Esophagus muscularis mucosa (tissue), 4 donors: ENCODE measurements at regions of chr17 and their contacts with region 1.

Region 1: GRCh38 chr17:43388359-43389045 is 10.3 kb upstream of the ARL4D start:
- DNase-seq: peak; percentile 98
- H3K4me3 ChIP-seq: peak overlapping the region; percentile 59 to 81 (median 70)
- H3K27ac ChIP-seq: peak overlapping the region; percentile 95 to 99 (median 97)
- H3K4me1 ChIP-seq: peaks cover 7 to 22% (median 18%) of the 10 kb centered on the region in 4 donors
- H3K27me3 ChIP-seq: no peaks in the 10 kb centered on the region
- CTCF ChIP-seq: no peak
- EP300 ChIP-seq: no peak
- POLR2A ChIP-seq: peak; percentile 88

Region 2: DNA sequence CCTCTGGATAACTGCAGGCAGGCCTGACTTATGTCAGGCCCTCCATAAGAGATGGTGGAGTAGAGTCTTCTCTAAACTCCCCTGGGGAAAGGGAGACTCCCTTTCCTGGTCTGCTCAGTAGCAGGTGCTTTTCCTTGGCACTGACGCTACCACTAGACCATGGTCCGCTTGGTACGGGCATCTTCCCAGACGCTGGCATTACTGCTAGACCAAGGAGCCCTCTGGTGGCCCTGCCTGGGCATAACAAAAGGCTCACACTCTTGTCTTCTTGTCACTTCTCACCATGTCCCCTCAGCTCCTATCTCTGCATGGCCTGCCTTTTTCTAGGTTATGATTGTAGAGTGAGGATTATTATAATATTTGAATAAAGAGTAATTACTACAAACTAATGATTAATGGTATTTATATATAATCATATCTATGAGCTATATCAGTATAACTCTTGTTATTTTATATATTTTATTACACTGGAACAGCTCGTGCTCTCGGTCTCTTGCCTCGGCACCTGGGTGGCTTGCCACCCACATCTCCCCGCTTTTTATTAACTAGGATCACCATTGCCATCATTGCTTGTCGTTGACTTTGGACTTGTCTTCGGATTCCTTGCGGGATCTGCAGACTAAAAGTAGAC is 49.5 kb before region 1 on chr17:
- intact Hi-C with region 1: no loop called
- DNase-seq: no peak
- H3K4me3 ChIP-seq: no peak overlapping the region
- H3K27ac ChIP-seq: no peak overlapping the region
- H3K4me1 ChIP-seq: peaks cover 16 to 26% (median 23%) of the 10 kb centered on the region in 4 donors
- H3K27me3 ChIP-seq: no peaks in the 10 kb centered on the region
- CTCF ChIP-seq: peak; percentile 67 to 81 (median 81)
- EP300 ChIP-seq: no peak
- POLR2A ChIP-seq: no peak

Region 3: GRCh38 chr17:43372273-43372911 is 16.1 kb before region 1 on chr17:
- intact Hi-C with region 1: loop called (anchors 2 kb)
- DNase-seq: no peak
- H3K4me3 ChIP-seq: no peak overlapping the region
- H3K27ac ChIP-seq: peak overlapping the region in 2 of 4 donors; percentile 3 to 20
- H3K4me1 ChIP-seq: peaks cover 24 to 34% (median 27%) of the 10 kb centered on the region in 4 donors
- H3K27me3 ChIP-seq: no peaks in the 10 kb centered on the region
- CTCF ChIP-seq: no peak
- EP300 ChIP-seq: no peak
- POLR2A ChIP-seq: no peak

Region 4: GRCh38 chr17:43524945-43525575 is 136.6 kb after region 1 on chr17:
- intact Hi-C with region 1: no loop called
- DNase-seq: no peak
- H3K4me3 ChIP-seq: no peak overlapping the region
- H3K27ac ChIP-seq: no peak overlapping the region
- H3K4me1 ChIP-seq: peaks cover 3 to 17% (median 13%) of the 10 kb centered on the region in 4 donors
- H3K27me3 ChIP-seq: no peaks in the 10 kb centered on the region
- CTCF ChIP-seq: no peak
- EP300 ChIP-seq: no peak
- POLR2A ChIP-seq: no peak